AG04450 (cell line): ENCODE measurements at regions of chrX and their contacts with region 1.

Region 1: GRCh38 chrX:42442745-42443144 is 335.2 kb downstream of the PPP1R2C start:
- DNase-seq: no peak
- H3K4me3 ChIP-seq: no peak overlapping the region
- H3K27ac ChIP-seq: no peak overlapping the region
- H3K27me3 ChIP-seq: no peaks in the 10 kb centered on the region
- CTCF ChIP-seq: no peak

Region 2: GRCh38 chrX:43589735-43590134 is 1147.0 kb after region 1 on chrX:
- CTCF ChIA-PET with region 1: no interaction called
- POLR2A ChIA-PET with region 1: interaction called, 10 read pairs
- DNase-seq: no peak
- H3K4me3 ChIP-seq: no peak overlapping the region
- H3K27ac ChIP-seq: no peak overlapping the region
- H3K27me3 ChIP-seq: no peaks in the 10 kb centered on the region
- CTCF ChIP-seq: no peak